ENCODE measurements at regions of chr13 and their contacts with region 1.

Region 1: DNA sequence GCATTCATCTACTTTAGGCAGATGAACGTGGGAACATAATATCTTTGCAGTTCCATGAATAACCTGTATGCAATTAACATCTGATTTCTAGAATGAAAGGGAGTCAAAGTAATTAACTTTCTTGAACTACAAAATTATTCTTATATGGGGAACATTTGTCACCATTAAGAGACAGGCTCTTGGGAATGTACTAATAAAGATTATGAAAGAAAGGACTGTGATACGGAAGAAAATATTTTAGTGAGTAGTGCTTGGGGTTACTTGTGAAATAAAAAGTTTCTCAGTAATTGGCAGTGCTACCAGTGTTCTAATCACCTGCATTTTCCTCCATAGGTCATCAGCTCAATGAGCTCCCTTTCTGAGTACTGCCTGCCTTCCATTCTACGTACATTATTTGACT is 85.4 kb downstream of the FRY start:
- DNase-seq: no peak
- H3K4me3 ChIP-seq: no peak overlapping the region
- H3K27ac ChIP-seq: no peak overlapping the region
- H3K4me1 ChIP-seq: no peaks in the 10 kb centered on the region
- H3K27me3 ChIP-seq: no peaks in the 10 kb centered on the region
- CTCF ChIP-seq: no peak

Region 2: DNA sequence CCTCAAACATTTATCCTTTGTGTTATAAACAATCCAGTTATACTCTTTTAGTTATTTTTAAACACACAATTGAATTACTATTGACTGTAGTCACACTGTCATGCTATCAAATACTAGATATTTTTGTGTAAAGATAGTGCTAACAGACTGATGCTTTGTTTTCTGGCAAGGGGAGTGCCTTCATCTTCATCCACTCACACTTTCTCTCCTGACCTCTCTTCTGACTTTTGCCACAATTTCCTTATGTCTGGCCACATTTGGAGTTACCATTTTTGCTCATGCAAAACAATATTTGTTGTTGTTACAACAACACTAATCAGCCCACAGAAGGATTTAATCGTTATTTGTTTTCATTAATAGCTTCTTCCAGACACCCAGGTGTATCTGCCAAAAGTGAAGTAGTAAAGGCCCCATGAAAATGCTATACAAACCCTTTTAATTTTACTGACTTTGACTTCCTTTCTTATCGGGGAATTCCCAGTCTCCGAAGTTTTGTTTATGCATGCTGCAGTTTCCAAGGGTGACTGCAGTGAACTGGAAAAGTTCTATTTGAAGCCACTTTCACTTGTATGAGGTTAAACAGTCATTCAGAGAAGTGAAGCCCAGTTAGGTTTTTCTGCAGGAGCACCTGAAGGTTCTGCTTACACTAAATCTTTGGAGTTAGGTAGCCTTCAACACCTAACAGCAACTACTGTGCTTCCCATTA is 151.5 kb before region 1 on chr13:
- CTCF ChIA-PET with region 1: interaction called, 12 read pairs
- POLR2A ChIA-PET with region 1: no interaction called
- intact Hi-C with region 1: no loop called
- DNase-seq: no peak
- H3K4me3 ChIP-seq: no peak overlapping the region
- H3K27ac ChIP-seq: no peak overlapping the region
- H3K4me1 ChIP-seq: no peaks in the 10 kb centered on the region
- H3K27me3 ChIP-seq: peaks cover 3% of the 10 kb centered on the region
- CTCF ChIP-seq: no peak

Region 3: GRCh38 chr13:32164622-32165268 is 47.7 kb after region 1 on chr13:
- CTCF ChIA-PET with region 1: no interaction called
- POLR2A ChIA-PET with region 1: no interaction called
- intact Hi-C with region 1: no loop called
- DNase-seq: peak; percentile 90
- H3K4me3 ChIP-seq: no peak overlapping the region
- H3K27ac ChIP-seq: no peak overlapping the region
- H3K4me1 ChIP-seq: no peaks in the 10 kb centered on the region
- H3K27me3 ChIP-seq: no peaks in the 10 kb centered on the region
- CTCF ChIP-seq: peak; percentile 92